ENCODE measurements at regions of chrX and their contacts with region 1.

Region 1: GRCh38 chrX:66046612-66047235 is 6.8 kb upstream of the VSIG4 start:
- DNase-seq: peak; percentile 62
- ATAC-seq: peak; percentile 28
- H3K4me3 Mint-ChIP-seq: peak overlapping the region; percentile 66
- H3K27ac Mint-ChIP-seq: peak overlapping the region; percentile 99
- H3K4me1 Mint-ChIP-seq: peaks cover 31% of the 10 kb centered on the region
- H3K27me3 Mint-ChIP-seq: no peaks in the 10 kb centered on the region

Region 2: DNA sequence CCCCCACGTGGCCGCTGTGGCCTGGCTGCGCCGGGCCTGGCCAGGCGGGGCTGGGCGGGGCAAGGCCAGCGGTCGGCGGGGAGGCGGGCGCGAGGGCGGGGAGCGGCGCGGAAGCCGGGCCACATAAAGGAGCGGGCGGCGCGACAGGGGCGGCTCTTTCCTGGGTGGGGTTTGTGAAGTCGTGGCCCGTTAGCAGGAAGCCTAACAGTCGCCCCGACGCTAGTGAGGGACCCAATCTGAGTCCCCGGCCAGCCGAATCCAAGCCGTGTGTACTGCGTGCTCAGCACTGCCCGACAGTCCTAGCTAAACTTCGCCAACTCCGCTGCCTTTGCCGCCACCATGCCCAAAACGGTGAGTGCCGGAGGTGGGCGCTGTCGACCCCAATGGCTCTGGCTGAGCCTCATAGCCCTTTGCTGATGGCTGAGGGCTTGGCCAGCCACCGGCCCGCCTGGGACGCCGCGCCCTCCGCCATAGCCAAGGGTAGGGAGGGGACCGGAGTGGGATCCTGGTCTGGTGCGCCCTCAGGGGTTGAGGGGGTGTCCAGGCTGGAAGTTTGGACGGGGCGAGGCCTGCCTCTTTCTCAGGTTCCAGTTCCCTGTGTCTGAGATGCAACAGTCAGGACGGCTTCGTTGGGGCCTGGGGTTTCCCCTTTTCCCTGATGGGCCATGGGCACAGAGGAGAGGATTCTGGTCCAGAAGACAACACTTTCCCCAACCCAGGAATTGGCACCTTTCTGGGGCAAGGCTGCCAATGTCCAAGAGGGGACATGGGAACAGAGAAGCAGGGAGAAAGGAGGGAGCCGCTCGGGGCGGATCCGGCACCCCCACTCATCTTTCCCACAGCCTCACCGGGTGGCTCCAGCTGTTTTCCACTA is 379.0 kb before region 1 on chrX and contains the start of gene MSN:
- CTCF ChIA-PET with region 1: no interaction called
- POLR2A ChIA-PET with region 1: no interaction called
- intact Hi-C with region 1: loop called in 1 of 2 experiments (anchors 5 kb)
- DNase-seq: peak; percentile 87
- ATAC-seq: peak; percentile 67
- H3K4me3 Mint-ChIP-seq: peak within 1 kb of the TSS; percentile 91
- H3K27ac Mint-ChIP-seq: peak within 1 kb of the TSS; percentile 96
- H3K4me1 Mint-ChIP-seq: peaks cover 28% of the 10 kb centered on the region
- H3K27me3 Mint-ChIP-seq: no peaks in the 10 kb centered on the region
- total RNA-seq, gene MSN: 476 to 609 TPM

Region 3: GRCh38 chrX:65706041-65706828 is 340.5 kb before region 1 on chrX:
- CTCF ChIA-PET with region 1: no interaction called
- POLR2A ChIA-PET with region 1: no interaction called
- intact Hi-C with region 1: loop called in 1 of 2 experiments (anchors 1 kb)
- DNase-seq: peak; percentile 81
- ATAC-seq: peak; percentile 86
- H3K4me3 Mint-ChIP-seq: peak overlapping the region; percentile 44
- H3K27ac Mint-ChIP-seq: peak overlapping the region; percentile 91
- H3K4me1 Mint-ChIP-seq: peaks cover 68% of the 10 kb centered on the region
- H3K27me3 Mint-ChIP-seq: no peaks in the 10 kb centered on the region

Region 4: GRCh38 chrX:65723706-65724105 is 323.0 kb before region 1 on chrX:
- CTCF ChIA-PET with region 1: no interaction called
- POLR2A ChIA-PET with region 1: interaction called, 3 read pairs
- intact Hi-C with region 1: loop called in 1 of 2 experiments (anchors 1 kb)
- DNase-seq: peak; percentile 60
- ATAC-seq: peak; percentile 86
- H3K4me3 Mint-ChIP-seq: peak overlapping the region; percentile 19
- H3K27ac Mint-ChIP-seq: peak overlapping the region; percentile 88
- H3K4me1 Mint-ChIP-seq: peaks cover 87% of the 10 kb centered on the region
- H3K27me3 Mint-ChIP-seq: no peaks in the 10 kb centered on the region

Region 5: GRCh38 chrX:65932176-65933084 is 114.3 kb before region 1 on chrX:
- CTCF ChIA-PET with region 1: no interaction called
- POLR2A ChIA-PET with region 1: no interaction called
- intact Hi-C with region 1: loop called in 1 of 2 experiments (anchors 2 kb)
- DNase-seq: peak; percentile 57
- ATAC-seq: peak; percentile 98
- H3K4me3 Mint-ChIP-seq: no peak overlapping the region
- H3K27ac Mint-ChIP-seq: peak overlapping the region; percentile 53
- H3K4me1 Mint-ChIP-seq: peaks cover 13% of the 10 kb centered on the region
- H3K27me3 Mint-ChIP-seq: no peaks in the 10 kb centered on the region

Region 6: GRCh38 chrX:66074920-66075879 is 28.5 kb after region 1 on chrX:
- CTCF ChIA-PET with region 1: no interaction called
- POLR2A ChIA-PET with region 1: no interaction called
- intact Hi-C with region 1: loop called (anchors 1 kb)
- DNase-seq: peak; percentile 66
- ATAC-seq: peak; percentile 76
- H3K4me3 Mint-ChIP-seq: peak overlapping the region; percentile 58
- H3K27ac Mint-ChIP-seq: peak overlapping the region; percentile 90
- H3K4me1 Mint-ChIP-seq: peaks cover 26% of the 10 kb centered on the region
- H3K27me3 Mint-ChIP-seq: no peaks in the 10 kb centered on the region

Measured in activated CD4-positive, alpha-beta T cell treated with anti-CD3 and anti-CD28 coated beads for 36 hours (primary cell).